H1 (cell line): ENCODE measurements at regions of chr1 and their contacts with region 1.

Region 1: GRCh38 chr1:175089136-175089718 is 21.6 kb downstream of the TNN start:
- DNase-seq: no peak
- H3K4me3 ChIP-seq: no peak overlapping the region
- H3K27ac ChIP-seq: no peak overlapping the region
- H3K4me1 ChIP-seq: no peaks in the 10 kb centered on the region
- H3K27me3 ChIP-seq: no peaks in the 10 kb centered on the region
- CTCF ChIP-seq: no peak
- EP300 ChIP-seq: no peak
- POLR2A ChIP-seq: no peak
- RAD21 ChIP-seq: no peak

Region 2: GRCh38 chr1:175124861-175125260 is 35.6 kb after region 1 on chr1:
- CTCF ChIA-PET with region 1: interaction called, 11 read pairs
- POLR2A ChIA-PET with region 1: no interaction called
- DNase-seq: no peak
- H3K4me3 ChIP-seq: no peak overlapping the region
- H3K27ac ChIP-seq: no peak overlapping the region
- H3K4me1 ChIP-seq: peaks cover 0 to 8% (median 6%) of the 10 kb centered on the region in 4 experiments; a peak in 4 of 7 replicates
- H3K27me3 ChIP-seq: no peaks in the 10 kb centered on the region
- CTCF ChIP-seq: no peak
- EP300 ChIP-seq: no peak
- POLR2A ChIP-seq: no peak
- RAD21 ChIP-seq: no peak

Region 3: GRCh38 chr1:175656416-175656815 is 567.2 kb after region 1 on chr1:
- CTCF ChIA-PET with region 1: no interaction called
- POLR2A ChIA-PET with region 1: no interaction called
- DNase-seq: no peak
- H3K4me3 ChIP-seq: no peak overlapping the region
- H3K27ac ChIP-seq: no peak overlapping the region
- H3K4me1 ChIP-seq: no peaks in the 10 kb centered on the region
- H3K27me3 ChIP-seq: 0 out of 7 replicates have a peak, but pooled peaks cover 0 to 2% (median 0%) of the 10 kb centered on the region in 4 experiments
- CTCF ChIP-seq: no peak
- EP300 ChIP-seq: no peak
- POLR2A ChIP-seq: no peak
- RAD21 ChIP-seq: no peak